ENCODE measurements at regions of chr17 and their contacts with region 1.

Region 1: DNA sequence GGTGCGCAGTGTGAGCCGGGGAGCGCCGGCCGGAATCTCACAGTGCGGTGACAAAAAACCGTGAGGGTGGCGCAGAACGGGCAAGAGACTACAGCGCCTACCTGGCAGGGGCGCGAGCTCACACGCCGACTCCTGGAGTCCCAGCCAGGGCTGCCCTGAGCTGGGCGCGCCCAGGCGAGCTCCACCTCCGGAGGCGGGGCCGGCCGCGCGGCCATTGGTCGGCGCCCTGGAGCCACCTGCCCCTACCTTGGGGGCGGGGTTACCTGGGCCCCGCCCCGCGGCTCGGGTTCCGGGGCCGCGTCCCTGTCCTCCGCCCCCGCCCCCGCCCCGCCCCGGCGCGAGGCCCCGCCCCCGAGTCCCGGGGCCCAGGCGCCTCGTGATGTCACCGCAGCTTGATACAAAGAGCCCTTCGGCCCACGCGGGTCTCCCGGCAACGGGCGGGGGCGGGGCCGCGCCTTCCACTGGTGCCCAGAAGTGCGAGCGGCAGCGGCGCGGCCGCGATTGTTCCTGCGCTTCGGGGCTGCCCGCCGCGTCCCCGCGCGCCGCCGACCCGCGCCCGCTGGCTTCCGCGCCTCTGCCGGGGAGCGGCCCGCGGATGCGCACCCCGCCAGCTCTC is 96.3 kb downstream of the RAB11FIP4 start:
- DNase-seq: peak; percentile 95
- ATAC-seq: peak; percentile 92
- H3K4me3 Mint-ChIP-seq: peak overlapping the region; percentile 84
- H3K27ac Mint-ChIP-seq: peak overlapping the region; percentile 82
- H3K4me1 Mint-ChIP-seq: peaks cover 48% of the 10 kb centered on the region
- H3K27me3 Mint-ChIP-seq: no peaks in the 10 kb centered on the region

Region 2: DNA sequence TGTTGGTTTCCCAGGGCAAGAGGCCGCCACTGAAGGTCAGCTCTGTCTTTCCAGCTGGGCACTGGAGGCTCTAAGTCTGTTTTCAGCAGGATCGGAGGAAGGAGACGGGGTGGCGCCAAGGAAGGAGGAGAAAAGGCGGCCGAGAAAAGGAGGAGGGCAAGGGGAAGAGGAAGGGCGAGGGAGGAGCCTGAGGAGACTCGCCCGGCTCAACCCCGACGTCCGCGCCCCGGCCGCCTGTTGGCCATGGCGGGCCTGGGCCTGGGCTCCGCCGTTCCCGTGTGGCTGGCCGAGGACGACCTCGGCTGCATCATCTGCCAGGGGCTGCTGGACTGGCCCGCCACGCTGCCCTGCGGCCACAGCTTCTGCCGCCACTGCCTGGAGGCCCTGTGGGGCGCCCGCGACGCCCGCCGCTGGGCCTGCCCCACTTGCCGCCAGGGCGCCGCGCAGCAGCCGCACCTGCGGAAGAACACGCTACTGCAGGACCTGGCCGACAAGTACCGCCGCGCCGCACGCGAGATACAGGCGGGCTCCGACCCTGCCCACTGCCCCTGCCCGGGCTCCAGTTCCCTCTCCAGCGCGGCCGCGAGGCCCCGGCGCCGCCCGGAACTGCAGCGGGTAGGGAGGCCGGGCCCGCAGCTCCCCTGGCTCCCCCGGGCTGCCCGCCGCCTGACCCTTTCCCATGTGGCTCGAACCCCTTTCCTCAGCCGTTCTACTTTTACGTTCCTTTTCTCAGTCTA is 516.8 kb before region 1 on chr17 and contains the start of gene RNF135:
- CTCF ChIA-PET with region 1: no interaction called
- POLR2A ChIA-PET with region 1: no interaction called
- intact Hi-C with region 1: no loop called
- DNase-seq: peak; percentile 76
- ATAC-seq: peak; percentile 73
- H3K4me3 Mint-ChIP-seq: peak within 1 kb of the TSS; percentile 93
- H3K27ac Mint-ChIP-seq: peak within 1 kb of the TSS; percentile 95
- H3K4me1 Mint-ChIP-seq: peaks cover 36% of the 10 kb centered on the region
- H3K27me3 Mint-ChIP-seq: peaks cover 9% of the 10 kb centered on the region
- total RNA-seq, gene RNF135: 5.8 to 6.0 TPM

Region 3: GRCh38 chr17:31171701-31172100 is 316.1 kb before region 1 on chr17:
- CTCF ChIA-PET with region 1: no interaction called
- POLR2A ChIA-PET with region 1: no interaction called
- intact Hi-C with region 1: no loop called
- DNase-seq: no peak
- ATAC-seq: no peak
- H3K4me3 Mint-ChIP-seq: no peak overlapping the region
- H3K27ac Mint-ChIP-seq: no peak overlapping the region
- H3K4me1 Mint-ChIP-seq: no peaks in the 10 kb centered on the region
- H3K27me3 Mint-ChIP-seq: no peaks in the 10 kb centered on the region

Region 4: GRCh38 chr17:31499771-31500554 is 12.2 kb after region 1 on chr17:
- CTCF ChIA-PET with region 1: interaction called, 12 read pairs
- POLR2A ChIA-PET with region 1: no interaction called
- intact Hi-C with region 1: no loop called
- DNase-seq: peak; percentile 71
- ATAC-seq: peak; percentile 80
- H3K4me3 Mint-ChIP-seq: no peak overlapping the region
- H3K27ac Mint-ChIP-seq: no peak overlapping the region
- H3K4me1 Mint-ChIP-seq: peaks cover 50% of the 10 kb centered on the region
- H3K27me3 Mint-ChIP-seq: no peaks in the 10 kb centered on the region